ENCODE measurements at regions of chr4 and their contacts with region 1.

Region 1: DNA sequence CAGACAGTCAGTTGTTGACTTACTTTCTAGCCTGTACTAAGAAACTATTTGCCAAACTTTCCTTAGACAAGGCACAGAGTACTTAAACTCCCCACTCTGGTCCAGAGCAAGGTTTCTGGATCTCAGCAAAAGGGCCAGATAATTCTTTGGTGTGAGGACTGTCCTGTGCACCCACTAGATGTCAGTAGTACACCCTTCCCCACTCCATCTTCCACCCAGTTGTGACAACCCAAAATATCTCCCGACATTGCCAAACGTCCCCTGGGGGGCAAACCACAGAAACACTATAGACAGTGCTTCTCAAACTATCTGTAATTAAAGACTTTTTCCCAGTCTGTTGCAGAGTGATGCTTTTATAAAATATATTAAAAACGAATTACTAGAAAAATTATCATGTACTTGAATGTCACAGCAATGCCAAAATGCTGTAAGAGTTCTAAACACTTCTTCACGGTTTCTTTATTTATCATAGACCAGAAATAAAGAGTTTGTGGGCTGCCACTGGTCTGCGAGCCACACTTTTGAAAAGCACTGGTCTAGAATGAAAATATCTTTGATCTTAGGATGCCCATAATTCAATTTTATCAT is 203.5 kb downstream of the PRDM5 start:
- DNase-seq: peak in 4 of 5 donors; percentile 10 to 34 (median 23)
- H3K4me3 ChIP-seq: no peak overlapping the region
- H3K27ac ChIP-seq: no peak overlapping the region
- H3K4me1 ChIP-seq: no peaks in the 10 kb centered on the region
- H3K27me3 ChIP-seq: no peaks in the 10 kb centered on the region
- CTCF ChIP-seq: peak in 1 of 3 donors; percentile 30
- EP300 ChIP-seq: no peak
- POLR2A ChIP-seq: no peak

Region 2: DNA sequence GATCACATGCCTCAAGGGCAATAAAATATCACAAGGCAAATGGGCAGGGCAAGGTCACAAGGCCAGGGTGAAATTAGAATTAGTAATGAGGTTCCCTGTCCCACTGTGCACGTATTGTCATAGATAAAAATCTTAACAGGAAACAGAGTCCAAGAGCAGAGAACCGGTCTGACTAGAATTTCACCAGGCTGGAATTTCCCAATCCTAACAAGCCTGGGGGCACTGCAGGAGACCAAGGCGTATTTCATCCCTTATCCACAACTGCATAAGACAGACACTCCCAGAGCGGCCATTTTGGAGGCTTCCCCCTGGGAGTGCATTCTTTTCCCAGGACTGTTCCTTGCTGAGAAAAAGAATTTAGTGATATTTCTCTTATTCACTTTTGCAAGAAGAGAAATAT is 229.3 kb after region 1 on chr4:
- intact Hi-C with region 1: no loop called
- DNase-seq: no peak
- H3K4me3 ChIP-seq: no peak overlapping the region
- H3K27ac ChIP-seq: no peak overlapping the region
- H3K4me1 ChIP-seq: no peaks in the 10 kb centered on the region
- H3K27me3 ChIP-seq: no peaks in the 10 kb centered on the region
- CTCF ChIP-seq: no peak
- EP300 ChIP-seq: no peak
- POLR2A ChIP-seq: no peak

Region 3: DNA sequence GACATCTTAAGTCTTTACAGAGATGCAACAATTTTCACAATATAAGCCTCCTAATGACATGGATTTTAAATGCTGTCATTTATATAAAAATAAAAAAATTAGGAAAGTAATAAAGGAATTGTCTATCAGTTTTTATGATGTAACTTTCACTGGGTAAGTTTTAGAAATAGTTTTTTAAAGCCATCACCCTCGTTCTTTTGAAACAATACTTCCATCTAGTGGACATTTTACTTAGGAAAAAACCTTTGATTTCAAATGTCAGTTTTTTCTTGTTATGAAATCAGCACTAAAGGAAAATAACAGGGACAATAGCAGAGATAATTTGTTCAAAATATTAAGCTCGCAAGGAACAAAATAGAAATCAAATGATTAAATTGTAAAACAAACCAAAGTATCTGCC is 377.6 kb after region 1 on chr4:
- intact Hi-C with region 1: loop called in 2 of 4 experiments (anchors 5 to 10 kb)
- DNase-seq: no peak
- H3K4me3 ChIP-seq: no peak overlapping the region
- H3K27ac ChIP-seq: no peak overlapping the region
- H3K4me1 ChIP-seq: no peaks in the 10 kb centered on the region
- H3K27me3 ChIP-seq: no peaks in the 10 kb centered on the region
- CTCF ChIP-seq: peak; percentile 24 to 33 (median 31)
- EP300 ChIP-seq: no peak
- POLR2A ChIP-seq: no peak

Region 4: DNA sequence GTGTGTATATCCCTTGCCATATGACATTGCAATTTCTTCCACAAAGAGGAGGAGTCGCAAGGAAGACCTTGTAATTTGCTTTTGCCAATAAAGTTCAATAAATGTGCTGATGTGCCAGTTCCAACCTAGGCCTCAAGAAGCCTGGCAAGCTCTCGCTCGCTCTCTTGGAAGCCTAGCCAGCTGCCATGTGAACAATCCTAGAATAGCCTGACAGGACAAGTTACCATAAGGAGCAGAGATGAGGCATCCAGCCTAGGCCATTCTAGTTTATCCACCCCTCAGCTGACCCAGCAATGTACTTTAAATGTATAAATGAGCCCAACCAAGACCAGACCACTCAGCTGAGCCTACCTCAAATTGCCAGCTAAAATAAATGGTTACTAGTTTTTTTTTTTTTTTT is 807.4 kb after region 1 on chr4:
- intact Hi-C with region 1: no loop called
- DNase-seq: no peak
- H3K4me3 ChIP-seq: no peak overlapping the region
- H3K27ac ChIP-seq: no peak overlapping the region
- H3K4me1 ChIP-seq: no peaks in the 10 kb centered on the region
- H3K27me3 ChIP-seq: no peaks in the 10 kb centered on the region
- CTCF ChIP-seq: no peak
- EP300 ChIP-seq: no peak
- POLR2A ChIP-seq: no peak